ENCODE measurements at regions of chr5 and their contacts with region 1.

Region 1: GRCh38 chr5:160508780-160509361 is 87.2 kb downstream of the PTTG1 start:
- DNase-seq: peak; percentile 83
- H3K4me3 Mint-ChIP-seq: no peak overlapping the region
- H3K27ac Mint-ChIP-seq: no peak overlapping the region
- H3K4me1 Mint-ChIP-seq: peaks cover 18% of the 10 kb centered on the region
- H3K27me3 Mint-ChIP-seq: peaks cover 18% of the 10 kb centered on the region
- CTCF ChIP-seq: peak; percentile 83

Region 2: GRCh38 chr5:160260881-160261815 is 247.7 kb before region 1 on chr5:
- CTCF ChIA-PET with region 1: no interaction called
- intact Hi-C with region 1: no loop called
- DNase-seq: peak; percentile 71
- H3K4me3 Mint-ChIP-seq: peak overlapping the region; percentile 31
- H3K27ac Mint-ChIP-seq: peak overlapping the region; percentile 81
- H3K4me1 Mint-ChIP-seq: peaks cover 34% of the 10 kb centered on the region
- H3K27me3 Mint-ChIP-seq: no peaks in the 10 kb centered on the region
- CTCF ChIP-seq: no peak

Region 3: GRCh38 chr5:160638161-160638742 is 129.4 kb after region 1 on chr5:
- CTCF ChIA-PET with region 1: no interaction called
- intact Hi-C with region 1: loop called (anchors 5 kb)
- DNase-seq: peak; percentile 50
- H3K4me3 Mint-ChIP-seq: no peak overlapping the region
- H3K27ac Mint-ChIP-seq: no peak overlapping the region
- H3K4me1 Mint-ChIP-seq: peaks cover 27% of the 10 kb centered on the region
- H3K27me3 Mint-ChIP-seq: peaks cover 17% of the 10 kb centered on the region
- CTCF ChIP-seq: no peak

Region 4: GRCh38 chr5:160685695-160686094 is 176.8 kb after region 1 on chr5:
- CTCF ChIA-PET with region 1: no interaction called
- intact Hi-C with region 1: loop called (anchors 2 kb)
- DNase-seq: peak; percentile 61
- H3K4me3 Mint-ChIP-seq: no peak overlapping the region
- H3K27ac Mint-ChIP-seq: no peak overlapping the region
- H3K4me1 Mint-ChIP-seq: peaks cover 12% of the 10 kb centered on the region
- H3K27me3 Mint-ChIP-seq: no peaks in the 10 kb centered on the region
- CTCF ChIP-seq: peak; percentile 78

Region 5: DNA sequence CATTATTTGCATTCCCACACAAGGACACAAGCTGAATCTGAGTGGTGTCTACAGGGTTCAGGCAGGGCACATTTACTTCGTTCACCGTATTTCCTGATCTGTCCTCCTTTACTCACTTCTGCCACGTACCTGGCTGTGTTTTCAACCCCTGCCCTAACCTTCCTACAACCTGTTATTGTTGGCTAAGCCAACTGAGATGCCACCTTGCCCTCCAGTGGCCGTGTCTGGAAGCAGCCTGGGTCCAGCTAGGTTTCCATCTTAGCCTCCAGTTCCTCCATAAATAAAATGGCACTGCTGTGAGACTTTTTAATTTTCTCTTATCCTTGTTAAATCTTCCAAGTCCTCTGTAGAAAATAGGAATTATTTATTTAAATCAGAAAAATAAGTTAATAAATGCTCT is 278.4 kb after region 1 on chr5:
- CTCF ChIA-PET with region 1: interaction called, 4 read pairs
- intact Hi-C with region 1: loop called (anchors 1 kb)
- DNase-seq: peak; percentile 78
- H3K4me3 Mint-ChIP-seq: peak overlapping the region; percentile 1
- H3K27ac Mint-ChIP-seq: no peak overlapping the region
- H3K4me1 Mint-ChIP-seq: peaks cover 12% of the 10 kb centered on the region
- H3K27me3 Mint-ChIP-seq: no peaks in the 10 kb centered on the region
- CTCF ChIP-seq: peak; percentile 73

Region 6: DNA sequence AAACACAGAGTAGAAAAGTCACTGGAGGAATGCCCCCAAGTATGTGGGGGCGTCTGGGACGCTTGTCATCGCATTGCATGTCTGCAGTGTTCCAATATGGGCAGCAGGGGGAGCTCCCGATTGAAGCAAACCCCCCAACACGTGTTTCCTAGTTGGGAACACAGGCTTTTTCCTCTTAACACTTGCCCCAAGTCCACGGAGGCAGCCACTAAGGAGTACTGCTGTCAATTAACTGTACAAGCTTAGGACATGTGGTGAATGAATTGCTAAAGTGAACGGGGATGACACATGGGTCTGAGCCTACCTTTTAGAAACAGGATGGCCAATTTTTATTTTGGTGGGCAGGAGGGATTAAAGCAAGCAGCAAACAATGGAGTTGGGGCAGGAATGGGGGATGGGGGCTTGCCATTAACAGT is 1035.5 kb after region 1 on chr5:
- CTCF ChIA-PET with region 1: no interaction called
- intact Hi-C with region 1: loop called (anchors 10 kb)
- DNase-seq: peak; percentile 55
- H3K4me3 Mint-ChIP-seq: no peak overlapping the region
- H3K27ac Mint-ChIP-seq: no peak overlapping the region
- H3K4me1 Mint-ChIP-seq: peaks cover 8% of the 10 kb centered on the region
- H3K27me3 Mint-ChIP-seq: peaks cover 50% of the 10 kb centered on the region
- CTCF ChIP-seq: peak; percentile 81